ENCODE measurements at regions of chr3 and their contacts with region 1.

Region 1: GRCh38 chr3:133487920-133488540 is 85.5 kb upstream of the CDV3 start:
- DNase-seq: no peak
- H3K4me3 ChIP-seq: no peak overlapping the region
- H3K27ac ChIP-seq: no peak overlapping the region
- H3K4me1 ChIP-seq: peaks cover 15% of the 10 kb centered on the region
- H3K27me3 ChIP-seq: no peaks in the 10 kb centered on the region
- CTCF ChIP-seq: peak; percentile 71

Region 2: GRCh38 chr3:132879636-132880035 is 608.4 kb before region 1 on chr3:
- CTCF ChIA-PET with region 1: no interaction called
- POLR2A ChIA-PET with region 1: no interaction called
- intact Hi-C with region 1: no loop called
- DNase-seq: no peak
- H3K4me3 ChIP-seq: no peak overlapping the region
- H3K27ac ChIP-seq: no peak overlapping the region
- H3K4me1 ChIP-seq: no peaks in the 10 kb centered on the region
- H3K27me3 ChIP-seq: no peaks in the 10 kb centered on the region
- CTCF ChIP-seq: no peak

Region 3: GRCh38 chr3:133384331-133385027 is 103.6 kb before region 1 on chr3:
- CTCF ChIA-PET with region 1: no interaction called
- POLR2A ChIA-PET with region 1: no interaction called
- intact Hi-C with region 1: no loop called
- DNase-seq: peak in 1 of 2 experiments; percentile 55
- H3K4me3 ChIP-seq: no peak overlapping the region
- H3K27ac ChIP-seq: no peak overlapping the region
- H3K4me1 ChIP-seq: peaks cover 8% of the 10 kb centered on the region
- H3K27me3 ChIP-seq: peaks cover 62% of the 10 kb centered on the region
- CTCF ChIP-seq: peak; percentile 60

Region 4: DNA sequence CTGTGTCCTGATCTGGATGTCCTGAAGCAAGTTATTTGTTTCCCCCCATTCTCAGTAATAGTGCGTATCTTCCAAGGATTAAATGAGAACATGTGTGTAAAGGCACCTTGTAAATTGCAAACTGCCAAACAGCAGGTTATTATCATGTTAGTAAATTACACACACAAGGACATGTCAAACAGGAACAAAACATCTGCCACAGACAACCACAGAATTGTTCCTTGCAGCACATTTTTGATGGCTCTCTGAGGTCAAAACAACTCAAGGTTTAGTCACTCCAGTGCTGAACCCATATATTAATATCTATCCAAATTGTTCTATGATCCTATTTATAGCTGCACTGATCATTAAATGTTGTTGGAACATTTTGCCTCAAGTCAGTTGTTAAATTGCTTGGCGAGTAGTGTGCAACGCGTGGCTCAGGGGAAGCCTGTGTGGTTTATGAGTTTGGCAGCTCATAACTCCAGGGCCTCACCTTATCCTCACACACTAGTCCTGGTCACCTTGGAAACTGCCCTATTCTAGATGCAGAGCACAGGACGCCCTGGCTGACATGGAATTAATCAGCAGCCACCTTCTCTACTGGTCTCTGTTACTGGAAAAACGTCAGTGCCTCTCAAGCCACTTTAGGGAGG is 39.2 kb after region 1 on chr3:
- CTCF ChIA-PET with region 1: no interaction called
- POLR2A ChIA-PET with region 1: no interaction called
- intact Hi-C with region 1: loop called (anchors 5 kb)
- DNase-seq: no peak
- H3K4me3 ChIP-seq: no peak overlapping the region
- H3K27ac ChIP-seq: no peak overlapping the region
- H3K4me1 ChIP-seq: no peaks in the 10 kb centered on the region
- H3K27me3 ChIP-seq: no peaks in the 10 kb centered on the region
- CTCF ChIP-seq: no peak